HAP-1 (cell line): ENCODE measurements at regions of chr1 and their contacts with region 1.

Region 1: DNA sequence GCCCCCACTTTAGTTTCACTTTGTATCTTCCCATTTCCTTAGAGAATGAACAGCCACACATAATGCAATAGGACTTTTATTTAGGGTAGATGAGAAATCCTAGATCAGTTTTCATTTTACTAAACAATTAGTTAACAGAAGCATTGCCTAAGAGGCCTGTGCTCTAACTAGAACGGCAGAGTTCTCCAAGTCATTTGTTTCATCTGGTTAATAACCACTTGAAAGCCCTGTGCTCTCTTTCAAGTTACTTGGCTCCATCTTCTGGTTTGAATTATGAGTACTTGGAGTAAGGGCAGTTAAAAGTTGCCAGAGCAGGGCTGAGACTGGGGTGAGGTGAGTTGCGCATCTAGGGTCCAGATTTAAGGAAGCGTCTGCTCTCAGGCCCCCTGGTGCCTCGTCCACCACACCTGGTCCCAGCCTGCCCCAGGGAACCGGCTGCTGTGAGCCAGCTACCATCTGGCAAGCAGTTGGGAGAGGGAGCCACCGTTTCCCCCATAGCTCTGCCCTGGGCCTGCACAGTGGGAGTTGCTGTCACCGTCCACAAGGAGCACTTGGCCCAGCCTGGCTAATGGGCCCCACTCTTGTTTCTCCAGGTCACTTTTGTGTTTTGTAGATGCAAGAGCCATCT is 18.1 kb upstream of the SLC44A3 start:
- DNase-seq: peak; percentile 28 to 77
- H3K4me3 ChIP-seq: no peak overlapping the region
- H3K4me1 ChIP-seq: peaks cover 32% of the 10 kb centered on the region
- H3K27me3 ChIP-seq: no peaks in the 10 kb centered on the region

Region 2: GRCh38 chr1:94061513-94062443 is 740.3 kb before region 1 on chr1:
- in situ Hi-C with region 1: loop called (anchors 25 kb)
- DNase-seq: peak; percentile 63 to 80
- H3K4me3 ChIP-seq: no peak overlapping the region
- H3K4me1 ChIP-seq: no peaks in the 10 kb centered on the region; the same call in 1 of the 2 replicates
- H3K27me3 ChIP-seq: no peaks in the 10 kb centered on the region

Region 3: GRCh38 chr1:94335950-94336349 is 466.1 kb before region 1 on chr1:
- in situ Hi-C with region 1: loop called (anchors 25 kb)
- DNase-seq: peak; percentile 70 to 74
- H3K4me3 ChIP-seq: no peak overlapping the region
- H3K4me1 ChIP-seq: no peaks in the 10 kb centered on the region
- H3K27me3 ChIP-seq: peaks cover 10% of the 10 kb centered on the region

Region 4: DNA sequence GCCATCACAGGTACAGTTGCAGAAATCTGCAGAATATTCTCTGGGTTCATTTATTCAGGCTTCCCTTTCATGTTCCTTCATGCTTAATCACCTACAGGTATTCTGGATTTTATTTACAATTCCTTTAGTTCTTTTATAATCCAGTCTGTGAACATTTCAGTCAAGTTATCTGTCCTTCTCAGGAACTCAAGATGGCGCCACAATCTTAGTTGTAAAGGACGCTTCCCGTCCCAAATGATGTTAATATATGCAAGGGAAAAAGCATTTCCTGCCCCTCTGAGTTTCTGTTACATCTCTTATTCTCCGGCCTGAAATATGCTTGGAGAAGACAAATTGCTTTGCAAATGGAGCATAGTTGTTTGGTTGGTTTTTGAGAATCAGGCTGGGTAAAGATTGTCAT is 279.7 kb before region 1 on chr1:
- in situ Hi-C with region 1: loop called (anchors 5 kb)
- DNase-seq: peak; percentile 49 to 55
- H3K4me3 ChIP-seq: no peak overlapping the region
- H3K4me1 ChIP-seq: peaks cover 2% of the 10 kb centered on the region
- H3K27me3 ChIP-seq: no peaks in the 10 kb centered on the region

Region 5: GRCh38 chr1:94843430-94843829 is 41.4 kb after region 1 on chr1:
- in situ Hi-C with region 1: no loop called
- DNase-seq: no peak
- H3K4me3 ChIP-seq: no peak overlapping the region
- H3K4me1 ChIP-seq: no peaks in the 10 kb centered on the region
- H3K27me3 ChIP-seq: no peaks in the 10 kb centered on the region